MCF 10A (cell line): ENCODE measurements at regions of chr17 and their contacts with region 1.

Region 1: DNA sequence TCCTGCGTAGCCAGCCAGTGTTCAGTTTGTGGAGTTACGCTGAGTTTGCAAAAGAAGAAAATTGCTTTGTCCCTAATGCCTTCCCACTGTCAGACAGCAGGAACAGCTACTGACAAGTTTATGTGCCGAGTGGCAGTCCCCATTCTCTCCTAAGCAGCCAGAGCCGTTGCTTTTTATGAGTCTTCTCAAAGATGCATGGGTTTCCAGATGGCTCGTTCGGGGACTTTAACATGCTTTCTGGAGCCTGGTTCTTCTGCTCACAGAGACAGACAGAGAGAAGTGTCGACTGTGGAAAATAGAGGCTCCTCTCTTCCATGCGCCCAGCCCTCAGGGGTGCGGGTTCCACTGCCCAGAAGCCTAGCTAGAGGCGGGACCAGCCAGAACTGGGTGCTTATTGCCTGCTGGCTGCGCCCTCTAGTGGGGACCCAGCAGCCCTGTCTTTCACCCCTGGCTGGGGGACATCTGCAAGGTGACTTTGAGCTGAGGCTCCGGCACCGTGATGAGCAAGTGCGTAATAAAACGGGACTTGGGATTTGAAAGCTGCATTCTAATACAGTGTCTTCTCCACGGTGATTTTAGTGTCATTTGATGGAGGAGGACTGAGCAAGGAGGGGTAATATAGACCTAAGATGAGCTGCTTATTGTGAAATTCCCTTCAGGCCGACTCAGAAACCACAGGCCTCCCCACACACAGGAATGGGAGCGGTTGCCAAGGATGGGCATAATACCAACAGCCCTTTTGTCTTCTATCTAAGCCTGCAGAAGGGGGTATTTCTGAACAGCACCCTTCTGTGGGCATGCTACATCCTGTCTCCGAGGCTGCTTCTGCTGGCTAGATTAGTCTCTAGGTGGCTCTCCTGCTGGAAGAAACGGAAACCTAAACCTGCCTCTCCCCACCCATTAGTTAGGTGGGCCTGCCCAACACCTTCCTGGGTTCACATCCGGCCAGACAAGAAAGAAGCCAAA is 73.1 kb downstream of the CCDC182 start:
- DNase-seq: peak; percentile 79
- H3K4me3 Mint-ChIP-seq: no peak overlapping the region
- H3K27ac Mint-ChIP-seq: no peak overlapping the region
- H3K4me1 Mint-ChIP-seq: peaks cover 19% of the 10 kb centered on the region
- H3K27me3 Mint-ChIP-seq: no peaks in the 10 kb centered on the region
- CTCF ChIP-seq: peak; percentile 90

Region 2: DNA sequence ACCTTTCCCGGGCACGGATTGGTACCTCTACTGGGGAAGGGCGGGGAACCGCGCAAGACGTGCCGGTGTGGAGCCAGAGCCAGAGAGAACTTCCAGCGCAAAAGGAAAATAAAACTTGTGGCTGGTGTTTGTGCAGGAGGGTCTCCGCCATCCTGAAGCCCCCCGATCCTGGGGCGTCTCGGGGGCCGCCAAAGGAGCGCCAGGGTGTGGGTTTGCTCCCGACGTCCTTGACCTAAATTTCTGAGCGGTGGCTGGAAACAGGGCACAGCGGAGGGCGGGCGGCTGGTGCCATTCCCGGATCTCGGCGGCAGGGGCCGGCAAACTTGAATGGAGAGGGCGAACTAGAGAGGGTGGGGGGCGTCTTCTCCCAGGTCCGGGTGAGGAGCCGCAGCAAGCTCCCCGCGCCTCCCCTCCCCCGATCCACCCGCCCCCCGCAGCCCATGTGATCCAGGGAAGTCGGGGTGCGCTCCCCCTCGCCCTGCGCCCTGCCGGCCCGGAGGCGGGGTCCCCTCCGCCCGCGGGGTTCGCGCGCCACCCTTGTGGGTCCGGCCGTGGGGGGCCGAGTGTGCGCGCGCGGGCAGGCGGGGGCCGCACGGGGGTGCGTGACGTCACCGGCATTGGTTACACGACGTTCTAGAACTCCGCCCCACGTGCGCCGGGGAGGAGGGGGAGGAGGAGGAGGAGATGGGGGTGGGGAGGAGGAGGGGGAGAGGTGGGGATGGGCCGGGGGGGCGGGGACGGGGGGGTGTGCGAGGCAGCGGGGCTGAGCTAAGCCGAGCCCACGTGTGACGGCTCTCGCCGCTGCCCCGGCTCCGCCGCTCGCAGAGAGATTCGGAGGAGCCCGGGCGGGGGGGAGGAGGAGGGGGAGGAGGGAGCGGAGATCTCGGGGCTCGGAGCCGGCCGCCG is 415.9 kb before region 1 on chr17 and contains the start of gene MSI2:
- CTCF ChIA-PET with region 1: interaction called, 5 read pairs
- POLR2A ChIA-PET with region 1: no interaction called
- intact Hi-C with region 1: loop called (anchors 5 kb)
- DNase-seq: peak; percentile 83
- H3K4me3 Mint-ChIP-seq: peak within 1 kb of the TSS; percentile 96
- H3K27ac Mint-ChIP-seq: peak within 1 kb of the TSS; percentile 89
- H3K4me1 Mint-ChIP-seq: peaks cover 18% of the 10 kb centered on the region
- H3K27me3 Mint-ChIP-seq: no peaks in the 10 kb centered on the region
- CTCF ChIP-seq: no peak
- total RNA-seq, gene MSI2: 52.4 and 60.6 TPM in 2 replicates

Region 3: DNA sequence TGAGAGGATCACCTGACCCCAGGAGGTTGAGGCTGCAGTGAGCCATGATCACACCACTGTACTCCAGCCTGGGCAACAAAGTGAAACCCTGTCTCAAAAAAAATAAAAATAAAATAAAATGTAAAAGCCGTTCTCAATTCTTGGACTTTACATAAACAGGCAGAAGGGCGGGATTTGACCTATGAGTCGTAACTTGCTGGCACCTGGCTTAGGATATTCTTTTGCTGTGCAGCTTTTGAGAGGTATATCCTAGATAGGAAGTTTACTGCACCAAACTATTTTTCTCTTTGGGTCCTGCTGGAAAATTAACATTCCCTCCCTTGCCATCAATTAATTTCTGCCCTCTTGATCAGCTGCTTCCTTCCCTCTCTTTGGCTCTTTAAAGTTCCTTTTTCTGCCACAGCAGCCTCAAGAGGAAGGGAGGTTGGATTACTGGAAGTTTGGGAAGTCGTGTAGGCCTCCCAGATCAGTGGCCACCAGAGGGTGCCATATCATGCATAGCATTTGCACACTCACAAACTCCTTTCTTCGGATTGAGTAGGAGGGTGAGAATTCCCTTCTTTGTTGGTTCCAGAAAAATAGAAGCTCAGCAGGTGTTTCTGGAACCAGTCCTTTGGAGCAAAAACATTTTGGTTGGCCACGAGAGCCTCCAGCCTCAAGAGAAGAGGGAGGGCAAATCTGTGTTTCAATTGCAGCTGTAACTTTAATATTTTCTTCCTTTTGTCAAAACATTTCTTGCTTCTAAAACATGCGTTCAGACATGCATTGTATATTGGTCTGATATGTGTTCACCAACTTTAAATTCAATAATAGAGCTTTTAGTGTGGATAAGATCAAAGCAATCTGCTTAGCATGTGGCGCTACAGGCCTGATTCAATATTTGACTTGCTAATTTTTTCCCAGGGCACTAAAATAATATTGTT is 74.2 kb before region 1 on chr17:
- CTCF ChIA-PET with region 1: interaction called, 26 read pairs
- POLR2A ChIA-PET with region 1: no interaction called
- intact Hi-C with region 1: loop called (anchors 1 kb)
- DNase-seq: peak; percentile 70
- H3K4me3 Mint-ChIP-seq: no peak overlapping the region
- H3K27ac Mint-ChIP-seq: peak overlapping the region; percentile 29
- H3K4me1 Mint-ChIP-seq: peaks cover 8% of the 10 kb centered on the region
- H3K27me3 Mint-ChIP-seq: no peaks in the 10 kb centered on the region
- CTCF ChIP-seq: peak; percentile 55

Region 4: DNA sequence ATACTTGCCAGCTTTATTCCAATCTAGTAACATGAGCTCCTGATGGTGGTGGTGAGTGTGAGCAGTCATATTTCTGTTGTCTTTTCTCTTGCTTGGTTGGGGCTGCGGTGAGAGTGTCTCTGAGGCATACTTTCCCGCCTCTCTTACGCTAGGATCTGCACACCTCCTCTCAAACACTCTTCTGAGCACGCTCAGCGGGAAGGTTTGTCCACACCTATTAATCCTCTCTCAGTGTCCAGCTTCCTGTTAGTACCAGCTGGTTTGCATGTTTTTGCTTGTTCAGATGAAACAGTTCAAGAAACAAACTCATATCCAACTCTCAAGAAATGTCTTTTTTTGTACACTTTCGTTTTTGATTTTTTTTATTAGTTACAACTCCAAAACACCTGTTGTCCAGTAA is 16.4 kb before region 1 on chr17:
- CTCF ChIA-PET with region 1: interaction called, 54 read pairs
- POLR2A ChIA-PET with region 1: interaction called, 3 read pairs
- intact Hi-C with region 1: no loop called
- DNase-seq: no peak
- H3K4me3 Mint-ChIP-seq: no peak overlapping the region
- H3K27ac Mint-ChIP-seq: no peak overlapping the region
- H3K4me1 Mint-ChIP-seq: no peaks in the 10 kb centered on the region
- H3K27me3 Mint-ChIP-seq: no peaks in the 10 kb centered on the region
- CTCF ChIP-seq: no peak

Region 5: GRCh38 chr17:57697891-57698711 is 26.2 kb after region 1 on chr17:
- CTCF ChIA-PET with region 1: interaction called, 21 read pairs
- POLR2A ChIA-PET with region 1: no interaction called
- intact Hi-C with region 1: no loop called
- DNase-seq: no peak
- H3K4me3 Mint-ChIP-seq: no peak overlapping the region
- H3K27ac Mint-ChIP-seq: no peak overlapping the region
- H3K4me1 Mint-ChIP-seq: no peaks in the 10 kb centered on the region
- H3K27me3 Mint-ChIP-seq: no peaks in the 10 kb centered on the region
- CTCF ChIP-seq: no peak

Region 6: DNA sequence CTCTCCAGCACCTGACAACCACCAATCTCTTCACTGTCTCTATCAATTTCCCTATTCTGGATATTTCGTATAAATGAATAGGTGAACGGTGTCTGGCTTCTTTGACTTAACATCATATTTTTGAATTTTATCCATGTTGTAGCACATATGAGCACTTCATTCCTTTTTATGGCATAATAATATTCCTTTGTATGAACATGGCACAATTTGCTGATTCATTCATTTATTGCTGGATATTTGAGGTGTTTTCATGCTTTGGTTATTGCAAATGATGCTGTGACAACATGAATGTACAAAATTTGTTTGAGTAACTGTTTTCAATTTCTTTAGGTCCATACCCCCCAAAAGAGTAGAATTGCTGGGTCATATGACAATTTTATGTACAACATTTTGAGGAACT is 61.1 kb after region 1 on chr17:
- CTCF ChIA-PET with region 1: no interaction called
- POLR2A ChIA-PET with region 1: no interaction called
- intact Hi-C with region 1: no loop called
- DNase-seq: no peak
- H3K4me3 Mint-ChIP-seq: no peak overlapping the region
- H3K27ac Mint-ChIP-seq: no peak overlapping the region
- H3K4me1 Mint-ChIP-seq: no peaks in the 10 kb centered on the region
- H3K27me3 Mint-ChIP-seq: peaks cover 54% of the 10 kb centered on the region
- CTCF ChIP-seq: no peak